ENCODE measurements at regions of chr1 and their contacts with region 1.

Region 1: DNA sequence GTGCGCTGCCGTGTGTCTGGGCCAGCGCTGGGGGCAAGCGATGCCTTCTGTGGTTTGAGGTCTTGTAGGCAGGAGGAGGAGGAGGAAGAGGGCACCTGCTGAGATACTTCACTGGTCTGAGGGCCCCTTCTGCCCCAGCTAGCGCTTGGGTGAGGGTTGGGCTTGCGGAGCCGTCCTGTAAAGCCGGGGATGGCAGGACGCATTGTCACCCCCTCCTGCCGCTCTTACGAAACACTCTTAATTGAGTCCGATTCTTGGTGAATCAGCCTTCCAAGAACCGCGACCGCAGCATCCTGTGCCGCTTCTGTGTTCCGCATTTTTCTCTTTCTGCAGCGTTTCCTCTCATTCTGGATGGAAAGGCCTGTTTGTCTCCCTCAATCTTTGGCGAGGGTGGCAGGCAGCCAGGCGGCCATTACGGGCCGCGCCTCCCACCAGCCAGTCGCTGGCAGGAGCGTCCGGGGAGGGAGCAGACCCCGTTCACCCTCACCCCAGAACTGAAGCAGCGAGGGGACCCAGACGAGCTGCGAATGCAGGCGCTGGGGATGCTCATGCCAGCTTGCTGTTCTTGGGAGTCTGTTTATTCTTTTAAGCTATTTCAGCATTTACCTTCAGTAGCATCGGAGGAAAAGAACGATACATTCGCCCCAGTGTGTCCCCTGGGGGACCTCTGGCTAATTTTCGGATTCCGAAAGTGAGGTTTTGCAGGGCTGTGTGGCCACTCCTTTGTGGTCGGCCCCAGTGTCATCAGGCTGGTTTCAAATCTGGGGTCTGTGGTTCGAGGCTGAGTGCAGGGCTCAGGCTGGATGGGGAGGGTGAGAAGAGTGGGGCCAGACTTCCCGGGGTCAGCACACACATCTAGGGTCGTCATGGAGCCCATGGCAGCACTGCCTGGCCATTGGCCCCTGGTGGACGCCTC is 62.7 kb downstream of the SKI start:
- DNase-seq: peak; percentile 69 to 89
- ATAC-seq: peak; percentile 77 to 88 (median 79)
- H3K4me3 ChIP-seq: peak overlapping the region; percentile 27
- H3K4me3 Mint-ChIP-seq: peak overlapping the region; percentile 92
- H3K27ac ChIP-seq: peak overlapping the region; percentile 81
- H3K27ac Mint-ChIP-seq: peak overlapping the region; percentile 95 to 97
- H3K4me1 ChIP-seq: peaks cover 72% of the 10 kb centered on the region
- H3K4me1 Mint-ChIP-seq: peaks cover 54 to 70% of the 10 kb centered on the region in 2 donors
- H3K27me3 ChIP-seq: no peaks in the 10 kb centered on the region
- H3K27me3 Mint-ChIP-seq: no peaks in the 10 kb centered on the region
- CTCF ChIP-seq: no peak

Region 2: GRCh38 chr1:2212542-2213491 is 78.0 kb before region 1 on chr1:
- intact Hi-C with region 1: no loop called
- DNase-seq: peak in 1 of 2 donors; percentile 82
- ATAC-seq: peak; percentile 45 to 78 (median 69)
- H3K4me3 ChIP-seq: no peak overlapping the region
- H3K4me3 Mint-ChIP-seq: no peak overlapping the region
- H3K27ac ChIP-seq: no peak overlapping the region
- H3K27ac Mint-ChIP-seq: no peak overlapping the region
- H3K4me1 ChIP-seq: peaks cover 16% of the 10 kb centered on the region
- H3K4me1 Mint-ChIP-seq: no peaks in the 10 kb centered on the region
- H3K27me3 ChIP-seq: peaks cover 5% of the 10 kb centered on the region
- H3K27me3 Mint-ChIP-seq: peaks cover 0 to 3% of the 10 kb centered on the region in 2 donors
- CTCF ChIP-seq: no peak

Region 3: GRCh38 chr1:2229037-2229864 is 61.6 kb before region 1 on chr1:
- intact Hi-C with region 1: loop called (anchors 2 kb)
- DNase-seq: peak; percentile 61 to 76
- ATAC-seq: peak; percentile 7 to 9 (median 8)
- H3K4me3 ChIP-seq: peak overlapping the region; percentile 58
- H3K4me3 Mint-ChIP-seq: peak overlapping the region; percentile 93
- H3K27ac ChIP-seq: peak overlapping the region; percentile 73
- H3K27ac Mint-ChIP-seq: peak overlapping the region; percentile 85 to 97
- H3K4me1 ChIP-seq: peaks cover 63% of the 10 kb centered on the region
- H3K4me1 Mint-ChIP-seq: peaks cover 38 to 60% of the 10 kb centered on the region in 2 donors
- H3K27me3 ChIP-seq: no peaks in the 10 kb centered on the region
- H3K27me3 Mint-ChIP-seq: peaks cover 0 to 2% of the 10 kb centered on the region in 2 donors
- CTCF ChIP-seq: no peak

Region 4: DNA sequence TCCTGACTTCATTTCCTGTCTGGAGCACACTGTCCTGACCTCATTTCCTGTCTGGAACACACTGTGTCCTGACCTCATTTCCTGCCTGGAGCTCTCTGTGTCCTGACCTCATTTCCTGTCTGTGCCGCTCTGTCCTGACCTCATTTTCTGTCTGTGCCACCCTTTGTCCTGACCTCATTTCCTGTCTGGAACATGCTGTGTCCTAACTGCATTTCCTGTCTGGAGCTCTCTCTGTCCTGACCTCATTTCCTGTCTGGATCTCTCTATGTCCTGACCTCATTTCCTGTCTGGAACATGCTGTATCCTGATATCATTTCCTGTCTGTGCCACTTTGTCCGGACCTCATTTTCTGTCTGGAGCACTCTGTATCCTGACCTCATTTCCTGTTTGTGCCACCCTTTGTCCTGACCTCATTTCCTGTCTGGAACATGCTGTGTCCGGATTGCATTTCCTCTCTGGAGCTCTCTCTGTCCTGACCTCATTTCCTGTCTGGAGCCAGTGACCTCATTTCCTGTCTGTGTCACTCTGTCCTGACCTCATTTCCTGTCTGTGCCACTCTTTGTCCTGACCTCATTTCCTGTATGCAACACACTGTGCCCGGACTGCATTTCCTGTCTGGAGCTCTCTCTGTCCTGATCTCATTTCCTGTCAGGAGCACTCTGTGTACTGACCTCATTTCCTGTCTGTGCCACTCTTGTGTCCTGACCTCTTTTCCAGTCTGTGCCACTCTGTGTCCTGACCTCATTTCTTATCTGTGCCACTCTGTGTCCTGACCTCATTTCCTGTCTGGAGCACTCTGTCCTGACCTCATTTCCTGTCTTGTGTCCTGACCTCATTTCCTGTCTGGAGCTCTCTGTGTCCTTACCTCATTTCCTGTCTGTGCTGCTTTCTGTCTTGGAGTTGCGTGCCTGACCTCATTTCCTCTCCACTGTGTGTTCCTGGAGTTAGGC is 35.2 kb before region 1 on chr1:
- intact Hi-C with region 1: loop called (anchors 1 kb)
- DNase-seq: peak; percentile 79 to 96
- ATAC-seq: peak; percentile 71 to 87 (median 71)
- H3K4me3 ChIP-seq: no peak overlapping the region
- H3K4me3 Mint-ChIP-seq: no peak overlapping the region
- H3K27ac ChIP-seq: peak overlapping the region; percentile 98
- H3K27ac Mint-ChIP-seq: no peak overlapping the region
- H3K4me1 ChIP-seq: peaks cover 69% of the 10 kb centered on the region
- H3K4me1 Mint-ChIP-seq: peaks cover 31 to 33% of the 10 kb centered on the region in 2 donors
- H3K27me3 ChIP-seq: no peaks in the 10 kb centered on the region
- H3K27me3 Mint-ChIP-seq: no peaks in the 10 kb centered on the region
- CTCF ChIP-seq: no peak

Region 5: GRCh38 chr1:2322065-2322571 is 31.3 kb after region 1 on chr1:
- intact Hi-C with region 1: no loop called
- DNase-seq: peak in 1 of 2 donors; percentile 34
- ATAC-seq: no peak
- H3K4me3 ChIP-seq: no peak overlapping the region
- H3K4me3 Mint-ChIP-seq: no peak overlapping the region
- H3K27ac ChIP-seq: no peak overlapping the region
- H3K27ac Mint-ChIP-seq: no peak overlapping the region
- H3K4me1 ChIP-seq: peaks cover 5% of the 10 kb centered on the region
- H3K4me1 Mint-ChIP-seq: peaks cover 0 to 6% of the 10 kb centered on the region in 2 donors
- H3K27me3 ChIP-seq: no peaks in the 10 kb centered on the region
- H3K27me3 Mint-ChIP-seq: peaks cover 0 to 5% of the 10 kb centered on the region in 2 donors
- CTCF ChIP-seq: no peak

Region 6: GRCh38 chr1:3069491-3070303 is 778.8 kb after region 1 on chr1:
- intact Hi-C with region 1: no loop called
- DNase-seq: no peak
- ATAC-seq: peak in 1 of 3 donors; percentile 40
- H3K4me3 ChIP-seq: no peak overlapping the region
- H3K4me3 Mint-ChIP-seq: peak overlapping the region; percentile 37
- H3K27ac ChIP-seq: no peak overlapping the region
- H3K27ac Mint-ChIP-seq: no peak overlapping the region
- H3K4me1 ChIP-seq: peaks cover 3% of the 10 kb centered on the region
- H3K4me1 Mint-ChIP-seq: no peaks in the 10 kb centered on the region
- H3K27me3 ChIP-seq: peaks cover 8% of the 10 kb centered on the region
- H3K27me3 Mint-ChIP-seq: peaks cover 0 to 16% of the 10 kb centered on the region in 2 donors
- CTCF ChIP-seq: no peak